Calu3 (cell line): ENCODE measurements at regions of chr5 and their contacts with region 1.

Region 1: GRCh38 chr5:44536650-44537260 is 147.5 kb upstream of the FGF10 start:
- DNase-seq: peak; percentile 67
- H3K4me3 Mint-ChIP-seq: no peak overlapping the region
- H3K27ac Mint-ChIP-seq: no peak overlapping the region
- H3K4me1 Mint-ChIP-seq: no peaks in the 10 kb centered on the region
- H3K27me3 Mint-ChIP-seq: no peaks in the 10 kb centered on the region
- CTCF ChIP-seq: peak; percentile 71

Region 2: GRCh38 chr5:44454002-44454401 is 82.8 kb before region 1 on chr5:
- CTCF ChIA-PET with region 1: no interaction called
- intact Hi-C with region 1: no loop called
- DNase-seq: no peak
- H3K4me3 Mint-ChIP-seq: no peak overlapping the region
- H3K27ac Mint-ChIP-seq: no peak overlapping the region
- H3K4me1 Mint-ChIP-seq: no peaks in the 10 kb centered on the region
- H3K27me3 Mint-ChIP-seq: no peaks in the 10 kb centered on the region
- CTCF ChIP-seq: no peak

Region 3: GRCh38 chr5:44605926-44606325 is 69.2 kb after region 1 on chr5:
- CTCF ChIA-PET with region 1: no interaction called
- intact Hi-C with region 1: loop called (anchors 2 kb)
- DNase-seq: peak; percentile 38
- H3K4me3 Mint-ChIP-seq: peak overlapping the region; percentile 69
- H3K27ac Mint-ChIP-seq: peak overlapping the region; percentile 59
- H3K4me1 Mint-ChIP-seq: peaks cover 23% of the 10 kb centered on the region
- H3K27me3 Mint-ChIP-seq: no peaks in the 10 kb centered on the region
- CTCF ChIP-seq: no peak

Region 4: GRCh38 chr5:44740659-44741058 is 203.9 kb after region 1 on chr5:
- CTCF ChIA-PET with region 1: no interaction called
- intact Hi-C with region 1: loop called (anchors 10 kb)
- DNase-seq: no peak
- H3K4me3 Mint-ChIP-seq: no peak overlapping the region
- H3K27ac Mint-ChIP-seq: no peak overlapping the region
- H3K4me1 Mint-ChIP-seq: no peaks in the 10 kb centered on the region
- H3K27me3 Mint-ChIP-seq: no peaks in the 10 kb centered on the region
- CTCF ChIP-seq: no peak

Region 5: DNA sequence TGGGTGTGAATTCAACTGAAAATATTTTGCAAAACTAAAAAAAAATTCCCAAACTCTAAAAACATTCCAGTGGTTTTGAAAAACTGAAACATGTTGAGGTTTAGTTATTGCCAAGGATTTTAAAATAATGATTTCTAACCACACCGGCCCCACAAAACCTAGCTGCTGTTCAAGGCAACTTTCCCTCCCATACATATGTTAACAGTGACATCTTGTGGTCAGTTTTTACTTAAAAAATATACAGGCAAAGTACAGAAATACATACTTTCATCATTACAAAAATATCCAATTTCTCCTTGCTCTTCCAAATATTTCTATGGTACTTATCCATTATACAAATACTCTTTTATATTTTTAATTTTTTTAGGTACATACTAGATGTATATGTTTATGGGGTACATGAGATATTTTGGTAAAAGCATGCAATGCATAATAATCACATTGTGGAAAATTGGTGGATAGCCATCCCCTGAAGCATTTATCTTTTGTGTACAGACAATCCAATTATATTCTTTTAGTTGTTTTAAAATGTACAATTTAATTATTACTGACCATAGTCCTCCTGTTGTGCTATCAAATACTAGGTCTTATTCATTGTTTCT is 237.6 kb after region 1 on chr5:
- CTCF ChIA-PET with region 1: interaction called, 3 read pairs
- intact Hi-C with region 1: loop called (anchors 1 kb)
- DNase-seq: no peak
- H3K4me3 Mint-ChIP-seq: no peak overlapping the region
- H3K27ac Mint-ChIP-seq: no peak overlapping the region
- H3K4me1 Mint-ChIP-seq: no peaks in the 10 kb centered on the region
- H3K27me3 Mint-ChIP-seq: no peaks in the 10 kb centered on the region
- CTCF ChIP-seq: peak; percentile 53

Region 6: DNA sequence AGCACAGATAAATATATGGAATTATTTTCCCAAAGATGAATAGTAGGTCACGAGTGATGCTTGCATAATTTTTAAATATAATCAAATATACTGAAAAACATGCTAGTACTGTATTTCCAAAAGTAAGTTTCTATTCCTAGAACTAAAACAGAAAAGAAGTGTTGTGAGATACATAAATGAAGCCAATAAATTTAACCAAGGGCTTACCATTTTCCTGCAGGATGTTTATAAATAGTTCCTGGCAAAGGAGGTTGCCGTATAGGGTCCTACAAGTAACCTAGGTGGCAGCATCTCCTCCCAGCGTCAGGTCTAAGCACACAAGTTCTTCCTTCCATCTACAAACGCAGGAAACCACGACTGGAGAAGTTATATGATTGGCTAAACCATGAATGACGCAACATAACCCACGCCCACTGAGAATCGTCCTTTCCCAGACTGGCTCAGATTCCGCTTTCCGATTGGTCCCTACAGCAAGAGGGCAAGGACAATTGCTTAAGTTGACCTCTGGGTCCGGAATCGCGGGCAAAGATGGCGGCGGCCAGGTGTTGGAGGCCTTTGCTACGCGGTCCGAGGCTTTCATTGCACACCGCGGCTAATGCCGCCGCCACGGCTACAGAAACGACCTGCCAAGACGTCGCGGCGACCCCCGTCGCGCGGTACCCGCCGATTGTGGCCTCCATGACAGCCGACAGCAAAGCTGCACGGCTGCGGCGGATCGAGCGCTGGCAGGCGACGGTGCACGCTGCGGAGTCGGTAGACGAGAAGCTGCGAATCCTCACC is 271.9 kb after region 1 on chr5 and contains the start of gene MRPS30:
- CTCF ChIA-PET with region 1: no interaction called
- intact Hi-C with region 1: no loop called
- DNase-seq: peak; percentile 91
- H3K4me3 Mint-ChIP-seq: peak within 1 kb of the TSS; percentile 97
- H3K27ac Mint-ChIP-seq: peak within 1 kb of the TSS; percentile 97
- H3K4me1 Mint-ChIP-seq: peaks cover 12% of the 10 kb centered on the region
- H3K27me3 Mint-ChIP-seq: no peaks in the 10 kb centered on the region
- CTCF ChIP-seq: no peak
- total RNA-seq, gene MRPS30: 66.6 and 67.6 TPM in 2 replicates